Common myeloid progenitor, CD34-positive (primary cell): ENCODE measurements at regions of chr4 and their contacts with region 1.

Region 1: DNA sequence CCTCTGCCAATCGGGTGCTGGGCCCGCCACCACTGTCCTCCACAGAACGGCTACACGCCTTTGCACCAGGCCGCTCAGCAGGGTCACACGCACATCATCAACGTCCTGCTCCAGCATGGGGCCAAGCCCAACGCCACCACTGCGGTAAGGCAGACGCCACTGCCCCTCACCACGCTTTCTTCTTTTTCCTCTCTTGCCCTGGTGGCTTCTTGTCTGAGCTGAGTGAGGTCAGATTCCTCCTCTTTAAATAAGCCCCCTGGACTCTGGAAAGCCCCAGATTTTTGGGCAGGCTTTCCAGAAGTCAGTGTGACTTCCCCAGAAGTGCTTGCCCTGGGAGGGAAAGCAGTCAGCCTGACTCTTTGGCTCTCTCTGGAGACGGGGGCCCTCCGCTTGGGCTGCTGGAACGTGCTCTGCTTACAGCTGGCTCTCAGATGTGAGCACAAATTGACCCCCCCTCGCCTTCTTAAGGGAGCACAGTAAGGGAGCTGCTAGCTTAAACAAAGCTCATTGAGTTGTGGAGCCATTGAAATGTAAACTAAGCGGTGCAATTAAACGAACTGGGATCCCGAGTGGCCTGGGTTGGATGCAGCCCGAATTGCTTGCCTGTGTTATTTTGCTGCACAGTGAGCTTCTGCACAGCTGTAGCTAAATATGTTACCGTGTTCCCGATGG is 243.1 kb downstream of the ANK2 start:
- DNase-seq: no peak
- H3K4me3 ChIP-seq: no peak overlapping the region
- H3K27ac ChIP-seq: no peak overlapping the region
- H3K4me1 ChIP-seq: no peaks in the 10 kb centered on the region
- H3K27me3 ChIP-seq: peaks cover 0 to 2% (median 0%) of the 10 kb centered on the region in 5 experiments

Region 2: DNA sequence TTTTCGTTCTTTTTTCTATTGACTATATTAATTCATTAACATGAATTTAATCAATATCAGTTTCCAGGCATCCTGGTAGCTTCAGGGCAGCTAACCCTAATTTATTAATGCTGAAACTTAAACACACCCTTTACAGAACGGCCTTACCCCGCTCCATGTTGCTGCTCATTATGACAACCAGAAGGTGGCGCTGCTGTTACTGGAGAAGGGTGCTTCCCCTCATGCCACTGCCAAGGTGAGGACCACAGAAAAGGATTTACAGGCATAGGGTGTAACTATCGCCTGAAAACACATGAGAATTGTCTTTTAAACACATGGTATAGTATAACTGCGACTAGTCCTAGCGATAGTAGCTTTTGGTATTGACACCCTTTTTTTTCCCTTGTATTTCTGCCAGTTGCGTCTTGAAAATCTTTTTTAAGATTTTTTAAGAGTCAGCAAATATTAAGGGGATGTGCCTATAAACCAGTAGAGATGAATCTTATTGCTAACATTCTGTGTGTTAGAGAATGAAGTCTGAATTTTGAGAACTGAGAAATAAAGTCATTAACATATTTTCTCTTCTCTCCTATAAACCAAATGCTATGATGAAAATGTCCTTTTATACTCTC is 14.1 kb before region 1 on chr4:
- CTCF ChIA-PET with region 1: interaction called, 11 read pairs
- POLR2A ChIA-PET with region 1: no interaction called
- DNase-seq: peak; percentile 68 to 86 (median 85)
- H3K4me3 ChIP-seq: no peak overlapping the region
- H3K27ac ChIP-seq: no peak overlapping the region
- H3K4me1 ChIP-seq: no peaks in the 10 kb centered on the region
- H3K27me3 ChIP-seq: peaks cover 0 to 3% (median 2%) of the 10 kb centered on the region in 5 experiments

Region 3: DNA sequence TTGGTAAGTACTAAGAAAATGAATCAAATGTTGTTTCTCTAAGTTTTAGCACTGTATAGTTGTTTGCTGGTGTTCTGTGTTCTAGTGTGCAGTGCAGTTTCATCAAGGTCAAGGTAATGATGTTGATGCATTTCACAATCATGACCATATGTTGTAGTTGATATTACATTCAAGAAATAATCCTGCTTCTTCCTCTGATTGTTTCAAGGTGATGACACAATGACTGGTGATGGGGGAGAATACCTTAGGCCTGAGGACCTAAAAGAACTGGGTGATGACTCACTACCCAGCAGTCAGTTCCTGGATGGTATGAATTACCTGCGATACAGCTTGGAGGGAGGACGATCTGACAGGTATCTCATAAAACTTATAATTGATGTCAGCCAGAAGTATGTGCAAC is 18.5 kb after region 1 on chr4:
- CTCF ChIA-PET with region 1: no interaction called
- POLR2A ChIA-PET with region 1: no interaction called
- DNase-seq: no peak
- H3K4me3 ChIP-seq: no peak overlapping the region
- H3K27ac ChIP-seq: no peak overlapping the region
- H3K4me1 ChIP-seq: no peaks in the 10 kb centered on the region
- H3K27me3 ChIP-seq: peaks cover 0 to 2% (median 0%) of the 10 kb centered on the region in 5 experiments